OCI-LY7 (cell line): ENCODE measurements at regions of chr10 and their contacts with region 1.

Region 1: GRCh38 chr10:101782811-101783735 is at the start of gene NPM3:
- DNase-seq: peak; percentile 90
- H3K4me3 ChIP-seq: peak within 1 kb of the TSS; percentile 93
- H3K27ac ChIP-seq: peak within 1 kb of the TSS; percentile 40
- H3K4me1 ChIP-seq: peaks cover 48% of the 10 kb centered on the region
- CTCF ChIP-seq: no peak
- total RNA-seq, gene NPM3: 115 and 122 TPM in 2 replicates

Region 2: GRCh38 chr10:101602761-101603398 is 180.2 kb before region 1 on chr10:
- CTCF ChIA-PET with region 1: interaction called, 20 read pairs
- POLR2A ChIA-PET with region 1: interaction called, 8 read pairs
- intact Hi-C with region 1: loop called (anchors 1 kb)
- DNase-seq: peak; percentile 90
- H3K4me3 ChIP-seq: no peak overlapping the region
- H3K27ac ChIP-seq: no peak overlapping the region
- H3K4me1 ChIP-seq: no peaks in the 10 kb centered on the region
- CTCF ChIP-seq: peak; percentile 99

Region 3: DNA sequence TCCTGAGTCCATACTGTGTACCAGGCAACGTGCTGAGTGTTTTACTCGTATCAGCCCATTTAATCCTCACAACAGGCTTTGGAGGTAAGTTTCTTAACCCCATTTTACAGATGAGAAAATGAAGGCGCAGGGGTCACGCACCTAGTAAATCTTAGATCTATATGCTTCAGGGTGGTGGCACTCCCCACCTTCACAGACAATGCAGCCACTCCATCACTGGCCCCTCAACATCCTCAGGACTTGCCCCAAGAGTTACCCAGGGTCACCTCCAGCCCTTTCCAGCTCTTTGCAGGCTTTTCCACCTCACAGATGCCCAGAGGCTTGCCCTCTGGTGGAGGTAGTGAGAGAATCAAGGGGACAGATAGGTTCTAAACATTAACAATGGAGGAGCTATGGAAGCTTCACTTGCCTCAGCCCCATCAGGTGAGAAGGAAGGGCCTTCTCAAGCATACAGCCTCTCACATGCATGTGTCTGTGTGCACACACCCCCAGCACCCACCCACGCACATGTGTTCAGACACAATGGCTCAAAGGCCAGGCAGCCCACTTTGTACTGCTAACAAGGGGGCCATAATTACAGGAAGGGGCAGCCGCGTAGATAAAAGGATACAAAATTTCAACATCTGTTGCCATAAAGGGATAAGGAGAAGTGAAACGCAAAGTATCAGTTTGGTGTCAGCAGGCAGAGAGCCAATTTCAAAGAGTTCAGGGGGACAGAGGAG is 165.8 kb before region 1 on chr10:
- CTCF ChIA-PET with region 1: interaction called, 3 read pairs
- POLR2A ChIA-PET with region 1: no interaction called
- intact Hi-C with region 1: loop called (anchors 5 kb)
- DNase-seq: peak; percentile 95
- H3K4me3 ChIP-seq: peak overlapping the region; percentile 47
- H3K27ac ChIP-seq: peak overlapping the region; percentile 96
- H3K4me1 ChIP-seq: peaks cover 52% of the 10 kb centered on the region
- CTCF ChIP-seq: peak; percentile 71

Region 4: GRCh38 chr10:101693978-101694673 is 88.9 kb before region 1 on chr10:
- CTCF ChIA-PET with region 1: no interaction called
- POLR2A ChIA-PET with region 1: no interaction called
- intact Hi-C with region 1: loop called (anchors 2 kb)
- DNase-seq: peak; percentile 78
- H3K4me3 ChIP-seq: peak overlapping the region; percentile 81
- H3K27ac ChIP-seq: peak overlapping the region; percentile 75
- H3K4me1 ChIP-seq: peaks cover 28% of the 10 kb centered on the region
- CTCF ChIP-seq: no peak

Region 5: DNA sequence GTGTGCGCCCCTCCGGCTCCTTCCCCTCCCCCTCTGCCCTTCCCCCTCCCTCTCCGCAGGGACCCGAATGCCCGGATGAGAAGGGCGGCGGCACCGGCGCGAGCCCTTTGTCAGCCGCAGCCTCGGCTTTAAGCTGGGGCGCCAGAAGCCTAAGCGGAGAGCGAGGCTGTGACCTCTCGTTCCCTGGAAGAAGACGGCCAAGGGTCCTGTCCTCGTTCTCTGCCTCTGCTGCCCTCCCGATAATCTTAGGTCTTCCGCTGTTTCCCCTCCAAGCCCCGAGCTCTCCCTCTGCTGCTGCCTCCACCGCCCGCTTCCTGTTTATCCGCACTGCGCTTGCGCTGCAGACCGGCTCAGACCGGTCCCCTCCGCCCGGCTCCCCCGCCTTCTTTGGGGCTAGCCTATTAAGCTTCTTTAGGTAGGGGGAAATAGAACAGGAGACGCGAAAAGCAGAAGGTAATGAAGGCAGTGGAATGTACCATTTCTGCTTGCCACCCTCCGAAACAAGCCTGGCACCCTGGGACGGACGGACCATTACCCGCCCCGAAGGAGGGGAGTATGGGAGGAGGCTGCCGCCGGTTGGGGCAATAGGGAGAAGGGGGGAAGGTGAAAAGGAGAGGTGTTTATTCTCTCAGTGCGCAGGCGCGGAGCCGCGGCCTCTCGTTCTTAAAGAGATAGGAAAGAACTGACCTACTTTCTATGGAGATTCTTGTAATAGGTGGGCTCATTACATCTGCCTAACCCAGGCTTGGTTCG is 35.2 kb after region 1 on chr10 and contains the start of gene OGA:
- CTCF ChIA-PET with region 1: interaction called, 3 read pairs
- POLR2A ChIA-PET with region 1: interaction called, 9 read pairs
- intact Hi-C with region 1: loop called (anchors 1 kb)
- DNase-seq: peak; percentile 100
- H3K4me3 ChIP-seq: peak within 1 kb of the TSS; percentile 95
- H3K27ac ChIP-seq: peak within 1 kb of the TSS; percentile 77
- H3K4me1 ChIP-seq: peaks cover 27% of the 10 kb centered on the region
- CTCF ChIP-seq: no peak
- total RNA-seq, gene OGA: 65.5 and 73.2 TPM in 2 replicates

Region 6: GRCh38 chr10:102072673-102073527 is 289.8 kb after region 1 on chr10:
- CTCF ChIA-PET with region 1: no interaction called
- POLR2A ChIA-PET with region 1: no interaction called
- intact Hi-C with region 1: loop called (anchors 5 kb)
- DNase-seq: peak; percentile 81
- H3K4me3 ChIP-seq: no peak overlapping the region
- H3K27ac ChIP-seq: no peak overlapping the region
- H3K4me1 ChIP-seq: no peaks in the 10 kb centered on the region
- CTCF ChIP-seq: peak; percentile 98